HCT116 (cell line): ENCODE measurements at regions of chr12 and their contacts with region 1.

Region 1: DNA sequence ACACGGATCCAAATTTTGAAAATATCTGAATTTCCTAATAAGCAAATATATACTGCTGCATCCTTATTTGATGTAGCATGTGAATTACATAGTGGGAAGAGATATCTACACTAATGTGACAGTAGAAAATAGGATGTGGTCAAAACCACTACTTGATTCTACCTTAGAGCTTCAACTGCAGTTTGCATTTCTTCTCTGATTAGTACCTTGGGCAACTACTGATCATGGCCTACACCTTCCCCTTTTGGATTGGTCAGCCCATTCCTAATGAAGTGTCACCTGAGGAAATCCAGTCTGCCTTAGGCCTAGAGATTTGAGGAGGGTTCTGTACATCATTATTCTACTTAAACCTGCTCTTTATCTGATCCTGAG is 10.7 kb downstream of the LLPH start:
- DNase-seq: no peak
- ATAC-seq: no peak
- H3K4me3 ChIP-seq: no peak overlapping the region
- H3K27ac ChIP-seq: no peak overlapping the region
- H3K4me1 ChIP-seq: no peaks in the 10 kb centered on the region
- H3K27me3 ChIP-seq: no peaks in the 10 kb centered on the region
- CTCF ChIP-seq: no peak
- POLR2A ChIP-seq: no peak
- RAD21 ChIP-seq: no peak

Region 2: DNA sequence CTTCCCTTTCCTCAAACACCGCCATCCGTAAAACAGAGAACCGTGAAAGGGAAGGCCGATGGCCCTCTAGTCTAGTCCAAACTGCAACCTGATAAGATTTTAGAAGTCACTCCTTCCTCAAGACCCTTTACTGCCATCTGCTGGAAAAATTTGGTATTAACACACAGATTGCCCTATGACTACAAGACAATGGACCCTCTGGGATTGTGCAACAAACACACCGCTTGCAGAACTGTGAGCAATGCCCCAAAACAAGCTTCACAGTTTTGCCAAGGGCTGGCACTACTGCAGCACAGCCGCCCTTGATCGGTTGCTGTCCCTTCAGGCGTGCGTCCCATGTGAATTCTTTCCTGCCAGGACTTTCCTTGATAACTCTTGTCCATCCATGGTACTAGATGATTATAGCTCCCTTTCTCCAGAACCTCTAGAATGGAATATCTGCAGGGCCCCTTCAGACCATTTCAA is 12.4 kb before region 1 on chr12:
- CTCF ChIA-PET with region 1: interaction called, 11 read pairs
- POLR2A ChIA-PET with region 1: interaction called, 4 read pairs
- RAD21 ChIA-PET with region 1: no interaction called
- intact Hi-C with region 1: no loop called
- DNase-seq: peak; percentile 93
- ATAC-seq: peak; percentile 92
- H3K4me3 ChIP-seq: no peak overlapping the region
- H3K27ac ChIP-seq: peak overlapping the region; percentile 5; the same call in 1 of the 2 replicates
- H3K4me1 ChIP-seq: peaks cover 4 to 11% of the 10 kb centered on the region in 2 experiments; a peak in 3 of 4 replicates
- H3K27me3 ChIP-seq: no peaks in the 10 kb centered on the region
- CTCF ChIP-seq: peak; percentile 81 to 91 (median 83)
- POLR2A ChIP-seq: no peak
- RAD21 ChIP-seq: peak; percentile 90

Region 3: DNA sequence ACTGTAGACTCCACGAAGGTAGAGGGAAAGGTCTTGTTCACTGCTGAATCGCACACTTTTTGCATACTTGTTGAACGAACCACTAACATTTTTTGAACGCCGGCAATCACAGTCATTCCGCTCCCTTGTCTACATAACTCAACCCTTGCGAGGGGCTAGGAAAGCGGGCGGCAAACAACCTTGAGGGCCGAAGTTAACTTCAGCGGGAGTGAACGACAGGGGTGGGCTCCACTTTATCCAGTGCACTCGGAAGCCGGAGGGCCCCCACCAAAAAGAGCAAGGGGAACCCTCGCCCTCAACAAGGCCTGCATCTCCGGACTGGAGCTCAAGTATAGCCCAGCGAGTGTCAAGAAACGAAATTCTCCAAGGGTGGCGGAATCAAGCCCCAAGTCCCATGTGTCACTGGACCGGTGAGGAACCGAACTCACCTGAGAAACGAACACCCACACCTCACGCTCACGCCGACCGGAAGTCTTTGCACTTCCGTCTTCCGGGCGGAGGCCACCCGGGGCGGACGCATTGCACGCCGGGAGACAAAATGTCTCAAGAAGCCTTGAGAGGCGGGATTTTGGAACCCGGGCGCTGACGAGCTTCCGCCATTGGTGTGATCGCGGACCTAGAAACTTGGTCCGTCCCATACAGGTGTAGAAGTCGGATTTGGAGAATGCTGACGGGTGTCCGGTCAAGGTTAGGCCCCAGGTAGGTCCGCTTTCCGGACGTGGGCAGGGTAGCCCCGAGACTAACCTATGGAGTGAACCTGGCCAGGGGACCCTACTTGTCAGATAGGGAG is 10.6 kb after region 1 on chr12 and contains the start of gene LLPH:
- CTCF ChIA-PET with region 1: no interaction called
- POLR2A ChIA-PET with region 1: interaction called, 13 read pairs
- RAD21 ChIA-PET with region 1: no interaction called
- intact Hi-C with region 1: no loop called
- DNase-seq: peak; percentile 94
- ATAC-seq: peak; percentile 90
- H3K4me3 ChIP-seq: peak within 1 kb of the TSS; percentile 59 to 74
- H3K27ac ChIP-seq: peak within 1 kb of the TSS; percentile 65
- H3K4me1 ChIP-seq: peaks cover 15 to 29% of the 10 kb centered on the region in 2 experiments
- H3K27me3 ChIP-seq: no peaks in the 10 kb centered on the region
- CTCF ChIP-seq: no peak
- POLR2A ChIP-seq: peak; percentile 89
- RAD21 ChIP-seq: no peak
- total RNA-seq, gene LLPH: 45.6 TPM

Region 4: DNA sequence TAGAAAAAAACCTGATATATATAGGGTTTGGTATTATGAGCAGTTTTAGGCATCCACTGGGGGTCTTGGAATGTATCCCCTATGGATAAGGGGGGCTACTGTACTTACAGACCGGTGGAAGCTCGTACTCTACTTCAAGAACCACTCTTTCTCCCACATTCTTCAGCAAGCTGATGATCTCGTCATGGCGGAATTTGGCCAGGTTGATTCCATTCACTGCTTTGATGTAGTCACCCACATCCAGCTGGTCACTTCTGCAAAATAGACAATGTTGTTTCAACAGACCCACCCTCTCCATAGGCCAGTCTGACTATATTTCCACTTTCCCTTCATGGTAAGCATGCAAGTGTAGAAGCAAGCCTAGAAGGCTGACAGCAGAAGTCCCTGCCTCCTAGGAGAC is 419.1 kb after region 1 on chr12:
- CTCF ChIA-PET with region 1: no interaction called
- POLR2A ChIA-PET with region 1: no interaction called
- RAD21 ChIA-PET with region 1: no interaction called
- intact Hi-C with region 1: no loop called
- DNase-seq: no peak
- ATAC-seq: no peak
- H3K4me3 ChIP-seq: no peak overlapping the region
- H3K27ac ChIP-seq: no peak overlapping the region
- H3K4me1 ChIP-seq: peaks cover 0 to 5% of the 10 kb centered on the region in 2 experiments; a peak in 1 of 4 replicates
- H3K27me3 ChIP-seq: peaks cover 47% of the 10 kb centered on the region
- CTCF ChIP-seq: no peak
- POLR2A ChIP-seq: no peak
- RAD21 ChIP-seq: no peak